Naive thymus-derived CD8-positive, alpha-beta T cell (primary cell): ENCODE measurements at regions of chr20 and their contacts with region 1.

Region 1: GRCh38 chr20:63657937-63658748 is at the start of gene RTEL1:
- DNase-seq: peak; percentile 73 to 98 (median 86)
- ATAC-seq: peak; percentile 82 to 85
- H3K4me3 Mint-ChIP-seq: peak within 1 kb of the TSS; percentile 90 to 99 (median 96)
- H3K27ac Mint-ChIP-seq: peak within 1 kb of the TSS; percentile 92 to 98 (median 96)
- H3K4me1 Mint-ChIP-seq: peaks cover 18 to 49% (median 39%) of the 10 kb centered on the region in 4 donors
- H3K27me3 Mint-ChIP-seq: no peaks in the 10 kb centered on the region
- polyA plus RNA-seq, gene RTEL1: 3.2 to 6.8 (median 4.4) TPM

Region 2: GRCh38 chr20:63627129-63627750 is 30.9 kb before region 1 on chr20:
- POLR2A ChIA-PET with region 1: interaction called, 29 read pairs
- DNase-seq: peak; percentile 90 to 99 (median 95)
- ATAC-seq: peak; percentile 82 to 83
- H3K4me3 Mint-ChIP-seq: peak overlapping the region; percentile 91 to 99 (median 98)
- H3K27ac Mint-ChIP-seq: peak overlapping the region; percentile 43 to 99 (median 96)
- H3K4me1 Mint-ChIP-seq: peaks cover 16 to 59% (median 45%) of the 10 kb centered on the region in 4 donors
- H3K27me3 Mint-ChIP-seq: no peaks in the 10 kb centered on the region

Region 3: DNA sequence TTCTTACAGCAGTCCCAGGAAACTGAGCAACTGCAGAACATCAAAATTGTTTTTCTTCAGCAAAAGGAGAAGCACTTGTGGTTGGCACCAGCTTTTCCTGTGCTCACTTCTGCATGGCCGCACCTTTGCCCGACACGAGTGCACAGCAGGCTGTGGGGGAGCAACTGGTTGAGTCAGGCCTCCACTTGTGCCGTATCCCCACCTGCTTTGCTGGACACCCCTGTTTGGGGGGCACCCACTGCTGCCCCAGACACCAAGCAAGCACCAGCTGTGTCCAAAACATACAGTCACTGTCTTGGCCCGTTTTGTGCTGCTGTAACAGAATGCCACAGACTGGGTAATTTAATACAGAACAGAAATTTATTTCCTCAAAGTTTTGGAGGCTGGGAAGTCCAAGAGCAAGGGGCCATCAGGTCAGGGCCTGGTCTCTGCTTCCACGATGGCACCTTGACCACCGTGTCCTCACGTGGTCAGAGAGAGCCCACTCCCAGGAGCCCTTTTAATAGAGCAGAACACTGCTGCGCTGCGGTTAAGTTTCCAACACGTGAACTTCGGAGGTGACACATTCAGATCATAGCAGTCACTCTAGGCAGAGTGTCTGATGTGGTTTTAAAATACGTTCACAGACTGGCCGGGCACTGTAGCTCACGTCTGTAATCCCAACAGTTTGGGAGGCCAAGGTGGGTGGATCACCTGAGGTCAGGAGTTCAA is 22.6 kb before region 1 on chr20:
- POLR2A ChIA-PET with region 1: interaction called, 16 read pairs
- DNase-seq: peak; percentile 47 to 93 (median 85)
- ATAC-seq: peak; percentile 61 to 77
- H3K4me3 Mint-ChIP-seq: peak overlapping the region; percentile 75 to 90 (median 82)
- H3K27ac Mint-ChIP-seq: peak overlapping the region; percentile 95 to 100 (median 100)
- H3K4me1 Mint-ChIP-seq: peaks cover 17 to 81% (median 63%) of the 10 kb centered on the region in 4 donors
- H3K27me3 Mint-ChIP-seq: no peaks in the 10 kb centered on the region

Region 4: DNA sequence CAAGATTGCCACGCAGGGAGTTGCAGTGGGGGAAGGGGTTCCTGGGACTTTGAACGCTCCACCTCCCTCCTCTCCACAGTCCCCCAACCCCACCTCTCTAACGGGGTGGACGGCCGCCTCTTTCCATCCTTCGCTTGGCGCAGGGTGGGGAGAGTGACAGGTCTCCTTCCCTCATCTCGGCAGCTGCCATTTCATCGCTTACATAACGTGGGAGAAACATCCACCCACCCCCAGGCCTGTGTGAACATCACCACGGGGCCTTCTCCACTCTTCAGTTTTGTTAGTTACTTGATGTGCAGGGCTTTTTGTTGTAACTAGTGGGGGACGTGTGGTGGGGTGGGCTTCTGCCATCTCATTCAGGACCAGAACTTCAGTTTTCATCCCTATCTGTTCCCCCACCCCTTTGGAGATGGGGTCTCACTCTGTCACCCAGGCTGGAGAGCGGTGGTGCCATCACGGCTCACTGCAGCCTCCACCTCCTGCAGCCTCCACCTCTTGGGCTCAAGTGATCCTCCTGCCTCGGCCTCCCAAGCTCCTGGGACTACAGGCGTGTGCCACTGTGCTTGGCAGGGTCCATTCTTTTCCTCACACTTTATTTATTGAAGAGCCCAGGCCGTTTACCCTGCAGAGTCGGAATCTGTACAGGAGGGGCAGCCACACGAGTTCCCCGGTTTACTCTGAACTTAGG is 17.7 kb after region 1 on chr20:
- POLR2A ChIA-PET with region 1: no interaction called
- DNase-seq: no peak
- ATAC-seq: no peak
- H3K4me3 Mint-ChIP-seq: no peak overlapping the region
- H3K27ac Mint-ChIP-seq: peak overlapping the region in 1 of 10 donors; percentile 70
- H3K4me1 Mint-ChIP-seq: peaks cover 0 to 1% (median 0%) of the 10 kb centered on the region in 4 donors
- H3K27me3 Mint-ChIP-seq: peaks cover 0 to 1% (median 0%) of the 10 kb centered on the region in 5 donors